Activated CD8-positive, alpha-beta memory T cell treated with anti-CD3 and anti-CD28 coated beads, Interleukin-2, amount 10 ng/mL, durations not matched to agents 7 days and 5 days (primary cell): ENCODE measurements at regions of chr9 and their contacts with region 1.

Region 1: DNA sequence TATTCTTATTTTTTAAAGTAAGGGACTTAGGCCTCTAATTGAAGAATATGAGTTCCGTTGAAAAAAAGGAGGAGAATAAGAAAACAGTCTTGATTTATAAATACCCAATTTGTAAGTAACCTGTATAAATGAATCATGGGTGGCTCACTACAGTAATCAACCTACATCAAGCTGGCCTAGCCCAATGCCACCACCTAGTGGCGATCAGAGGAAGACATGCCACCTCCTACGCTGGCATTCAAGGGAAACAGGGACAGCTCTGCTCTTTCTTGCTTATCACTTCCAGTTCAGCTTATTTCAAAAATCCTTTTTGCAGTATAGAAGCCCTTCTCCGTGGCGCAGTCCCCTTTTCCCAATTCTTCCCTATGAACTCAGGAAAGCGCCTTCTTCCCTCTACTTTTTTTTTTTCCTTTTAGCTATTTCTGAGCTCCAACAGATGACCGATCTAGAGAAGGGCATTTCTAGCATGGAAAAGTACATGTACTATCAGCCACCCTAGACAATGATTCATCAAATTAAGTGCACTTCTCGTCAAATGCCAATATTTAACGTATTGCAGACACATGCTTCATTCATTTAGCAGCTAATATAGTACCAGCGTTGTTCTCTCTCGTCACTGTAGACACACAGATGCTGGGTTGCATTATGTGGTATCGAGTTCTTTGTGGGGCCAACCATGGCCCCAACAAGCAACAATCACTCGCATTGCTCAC is 28.3 kb downstream of the PTPN3 start:
- DNase-seq: peak; percentile 80
- ATAC-seq: peak; percentile 84
- H3K4me3 Mint-ChIP-seq: no peak overlapping the region
- H3K27ac Mint-ChIP-seq: no peak overlapping the region
- H3K4me1 Mint-ChIP-seq: peaks cover 35% of the 10 kb centered on the region
- H3K27me3 Mint-ChIP-seq: peaks cover 24% of the 10 kb centered on the region

Region 2: DNA sequence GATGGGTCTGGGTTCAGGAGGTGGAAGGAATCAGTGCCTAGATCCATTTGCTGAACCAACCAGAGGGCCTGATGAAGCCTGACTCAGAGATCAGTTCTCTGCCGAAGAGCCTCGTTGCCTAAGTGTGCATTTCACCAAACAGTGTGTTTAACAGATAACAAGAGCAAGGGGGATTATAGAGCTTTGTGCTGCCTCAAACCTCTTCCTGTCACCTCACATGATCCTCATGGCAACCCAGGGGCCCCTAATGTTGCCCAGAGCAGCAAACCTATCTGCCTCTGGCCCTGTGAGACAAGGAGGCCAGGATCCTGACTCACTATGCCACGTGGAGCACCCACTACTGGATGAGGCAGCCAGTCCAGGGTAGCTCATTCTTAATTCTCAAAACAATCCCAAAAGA is 82.6 kb before region 1 on chr9:
- CTCF ChIA-PET with region 1: no interaction called
- DNase-seq: no peak
- ATAC-seq: no peak
- H3K4me3 Mint-ChIP-seq: no peak overlapping the region
- H3K27ac Mint-ChIP-seq: no peak overlapping the region
- H3K4me1 Mint-ChIP-seq: peaks cover 3% of the 10 kb centered on the region
- H3K27me3 Mint-ChIP-seq: peaks cover 10% of the 10 kb centered on the region

Region 3: GRCh38 chr9:109411798-109412352 is 57.9 kb before region 1 on chr9:
- CTCF ChIA-PET with region 1: interaction called, 15 read pairs
- DNase-seq: peak; percentile 68
- ATAC-seq: peak; percentile 43
- H3K4me3 Mint-ChIP-seq: peak overlapping the region; percentile 34
- H3K27ac Mint-ChIP-seq: peak overlapping the region; percentile 94
- H3K4me1 Mint-ChIP-seq: peaks cover 60% of the 10 kb centered on the region
- H3K27me3 Mint-ChIP-seq: peaks cover 3% of the 10 kb centered on the region

Region 4: DNA sequence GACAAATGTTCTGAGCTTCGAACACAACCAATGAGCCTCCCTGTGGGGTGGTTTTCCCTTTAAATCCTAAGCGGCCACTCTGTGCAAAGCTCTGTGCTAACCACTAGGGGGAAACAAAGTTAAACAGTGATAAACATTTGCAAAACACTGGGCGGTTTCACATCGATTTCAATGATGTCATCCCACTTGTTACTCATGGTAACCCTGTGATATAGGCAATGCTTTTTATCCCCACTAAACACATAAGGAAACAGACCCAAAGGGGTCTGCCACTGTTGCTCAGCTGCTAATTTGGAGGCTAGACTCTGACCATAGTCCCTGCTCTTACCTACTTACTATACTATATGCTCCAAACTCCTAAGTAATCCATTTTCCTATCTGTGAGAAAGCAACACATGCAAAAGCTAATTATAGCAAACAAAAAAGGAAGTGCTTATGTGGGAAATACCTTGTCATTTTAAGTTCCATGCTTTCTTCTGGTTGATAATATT is 29.0 kb before region 1 on chr9:
- CTCF ChIA-PET with region 1: interaction called, 148 read pairs
- DNase-seq: peak; percentile 82
- ATAC-seq: peak; percentile 93
- H3K4me3 Mint-ChIP-seq: no peak overlapping the region
- H3K27ac Mint-ChIP-seq: peak overlapping the region; percentile 71
- H3K4me1 Mint-ChIP-seq: peaks cover 26% of the 10 kb centered on the region
- H3K27me3 Mint-ChIP-seq: peaks cover 37% of the 10 kb centered on the region

Region 5: GRCh38 chr9:109453210-109453842 is 16.5 kb before region 1 on chr9:
- CTCF ChIA-PET with region 1: interaction called, 72 read pairs
- DNase-seq: no peak
- ATAC-seq: no peak
- H3K4me3 Mint-ChIP-seq: no peak overlapping the region
- H3K27ac Mint-ChIP-seq: no peak overlapping the region
- H3K4me1 Mint-ChIP-seq: peaks cover 15% of the 10 kb centered on the region
- H3K27me3 Mint-ChIP-seq: peaks cover 31% of the 10 kb centered on the region

Region 6: GRCh38 chr9:109683521-109683920 is 213.7 kb after region 1 on chr9:
- CTCF ChIA-PET with region 1: no interaction called
- DNase-seq: no peak
- ATAC-seq: no peak
- H3K4me3 Mint-ChIP-seq: no peak overlapping the region
- H3K27ac Mint-ChIP-seq: no peak overlapping the region
- H3K4me1 Mint-ChIP-seq: no peaks in the 10 kb centered on the region
- H3K27me3 Mint-ChIP-seq: no peaks in the 10 kb centered on the region

Region 7: DNA sequence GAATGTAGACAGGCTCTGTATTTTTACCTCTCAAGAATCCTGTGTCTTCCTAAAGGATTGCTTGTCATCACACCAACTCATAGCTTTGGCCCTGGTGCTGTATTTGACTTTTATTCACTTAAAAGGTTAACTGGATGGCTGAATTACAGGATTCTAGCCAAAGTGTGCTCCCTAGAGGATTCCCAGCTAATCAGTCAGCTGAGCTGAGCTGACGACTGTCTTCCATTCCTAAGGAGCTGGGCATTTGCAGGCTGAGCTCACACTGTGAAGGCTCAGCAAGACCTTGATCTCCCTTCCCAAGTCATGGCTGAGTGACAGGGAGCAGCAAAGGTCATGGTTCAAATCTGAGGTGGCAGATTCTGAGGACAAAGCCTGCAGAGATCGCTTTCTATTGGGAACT is 251.2 kb after region 1 on chr9:
- CTCF ChIA-PET with region 1: no interaction called
- DNase-seq: no peak
- ATAC-seq: no peak
- H3K4me3 Mint-ChIP-seq: no peak overlapping the region
- H3K27ac Mint-ChIP-seq: no peak overlapping the region
- H3K4me1 Mint-ChIP-seq: no peaks in the 10 kb centered on the region
- H3K27me3 Mint-ChIP-seq: no peaks in the 10 kb centered on the region